Aorta (tissue), 5 donors: ENCODE measurements at regions of chr1 and their contacts with region 1.

Region 1: DNA sequence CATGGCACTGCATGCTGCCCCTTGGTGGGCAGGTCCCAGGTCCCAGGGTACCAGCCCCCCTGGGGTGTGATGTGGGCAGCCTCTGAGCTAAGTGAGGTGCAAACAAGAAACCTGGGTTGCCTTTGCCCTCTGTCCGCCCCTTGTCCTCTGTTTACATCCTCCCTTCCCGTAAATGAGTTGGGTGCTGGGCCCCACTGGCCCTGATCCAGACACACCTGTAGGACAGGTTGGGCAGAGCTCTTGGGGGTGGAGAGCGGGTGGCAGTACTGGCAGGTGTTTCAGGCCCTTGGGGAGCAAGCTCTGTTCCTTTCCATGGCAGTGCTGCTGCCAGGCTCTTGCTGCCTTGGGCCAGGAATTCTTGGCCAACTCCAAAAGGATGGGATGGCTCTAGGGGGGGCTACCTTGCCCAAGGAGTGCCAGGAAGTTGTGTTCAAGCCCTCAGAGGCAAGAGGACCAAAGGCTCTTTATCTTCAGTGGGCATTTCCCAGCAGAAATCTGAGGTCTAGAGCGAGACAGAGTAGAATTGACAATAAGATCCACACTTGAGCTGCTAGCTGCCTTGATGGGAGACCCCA is 35.9 kb downstream of the ELF3 start:
- DNase-seq: no peak
- ATAC-seq: peak; percentile 36
- H3K4me3 ChIP-seq: no peak overlapping the region
- H3K27ac ChIP-seq: no peak overlapping the region
- H3K4me1 ChIP-seq: no peaks in the 10 kb centered on the region
- H3K27me3 ChIP-seq: no peaks in the 10 kb centered on the region

Region 2: GRCh38 chr1:202105539-202106276 is 59.4 kb after region 1 on chr1:
- intact Hi-C with region 1: loop called in 1 of 2 experiments (anchors 5 kb)
- DNase-seq: no peak
- ATAC-seq: no peak
- H3K4me3 ChIP-seq: no peak overlapping the region
- H3K27ac ChIP-seq: no peak overlapping the region
- H3K4me1 ChIP-seq: no peaks in the 10 kb centered on the region
- H3K27me3 ChIP-seq: no peaks in the 10 kb centered on the region

Region 3: DNA sequence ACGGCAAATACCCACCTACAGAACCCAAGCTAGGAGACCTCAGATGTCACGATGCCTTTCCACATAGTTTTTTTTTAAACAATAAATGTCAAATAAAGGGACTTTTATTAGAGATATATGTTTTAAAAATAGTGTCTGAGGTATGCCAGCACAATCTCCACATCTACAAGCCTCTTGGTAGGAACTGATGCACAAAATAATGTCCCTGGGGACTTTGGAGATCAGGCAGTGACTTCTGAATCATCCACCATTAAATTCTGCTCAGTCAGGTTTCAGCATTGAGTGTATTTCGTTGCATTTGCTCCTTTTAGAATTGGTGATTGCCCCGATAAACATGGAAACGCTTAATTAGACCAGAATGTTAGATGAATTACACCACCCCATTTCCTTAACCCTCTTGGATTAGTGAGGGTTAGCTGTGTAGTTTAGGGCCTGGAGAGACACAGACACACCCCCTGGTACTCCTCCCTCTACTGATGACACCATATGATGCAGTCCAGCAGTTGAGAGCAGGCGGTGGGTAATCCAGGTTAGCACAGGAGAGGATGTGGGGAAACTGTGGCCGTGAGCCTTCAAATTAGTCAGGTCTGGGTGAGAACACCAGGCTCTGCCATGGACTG is 180.8 kb after region 1 on chr1:
- intact Hi-C with region 1: no loop called
- DNase-seq: no peak
- ATAC-seq: no peak
- H3K4me3 ChIP-seq: no peak overlapping the region
- H3K27ac ChIP-seq: no peak overlapping the region
- H3K4me1 ChIP-seq: peaks cover 0 to under 1% of the 10 kb centered on the region in 2 donors
- H3K27me3 ChIP-seq: no peaks in the 10 kb centered on the region